ENCODE measurements at regions of chr1 and their contacts with region 1.

Region 1: GRCh38 chr1:207840380-207840779 is 70.5 kb downstream of the CD34 start:
- DNase-seq: no peak
- H3K4me3 ChIP-seq: no peak overlapping the region
- H3K4me3 Mint-ChIP-seq: no peak overlapping the region
- H3K27ac ChIP-seq: no peak overlapping the region
- H3K27ac Mint-ChIP-seq: peak overlapping the region in 5 of 8 donors; percentile 12 to 87 (median 43)
- H3K4me1 ChIP-seq: peaks cover 69% of the 10 kb centered on the region
- H3K4me1 Mint-ChIP-seq: peaks cover 79 to 99% (median 92%) of the 10 kb centered on the region in 3 donors
- H3K27me3 ChIP-seq: no peaks in the 10 kb centered on the region
- H3K27me3 Mint-ChIP-seq: peaks cover 0 to 3% of the 10 kb centered on the region in 2 donors

Region 2: GRCh38 chr1:207828485-207829158 is 11.8 kb before region 1 on chr1:
- CTCF ChIA-PET with region 1: interaction called, 18 read pairs
- POLR2A ChIA-PET with region 1: no interaction called
- DNase-seq: peak; percentile 32 to 73 (median 47)
- H3K4me3 ChIP-seq: no peak overlapping the region
- H3K4me3 Mint-ChIP-seq: no peak overlapping the region
- H3K27ac ChIP-seq: peak overlapping the region; percentile 48
- H3K27ac Mint-ChIP-seq: peak overlapping the region; percentile 65 to 98 (median 86)
- H3K4me1 ChIP-seq: peaks cover 88% of the 10 kb centered on the region
- H3K4me1 Mint-ChIP-seq: peaks cover 84 to 100% (median 98%) of the 10 kb centered on the region in 3 donors
- H3K27me3 ChIP-seq: no peaks in the 10 kb centered on the region
- H3K27me3 Mint-ChIP-seq: peaks cover 4% of the 10 kb centered on the region in 2 donors

Region 3: GRCh38 chr1:207897188-207897587 is 56.8 kb after region 1 on chr1:
- CTCF ChIA-PET with region 1: no interaction called
- POLR2A ChIA-PET with region 1: no interaction called
- DNase-seq: no peak
- H3K4me3 ChIP-seq: no peak overlapping the region
- H3K4me3 Mint-ChIP-seq: no peak overlapping the region
- H3K27ac ChIP-seq: no peak overlapping the region
- H3K27ac Mint-ChIP-seq: no peak overlapping the region
- H3K4me1 ChIP-seq: no peaks in the 10 kb centered on the region
- H3K4me1 Mint-ChIP-seq: no peaks in the 10 kb centered on the region
- H3K27me3 ChIP-seq: no peaks in the 10 kb centered on the region
- H3K27me3 Mint-ChIP-seq: no peaks in the 10 kb centered on the region